ENCODE measurements at regions of chr18 and their contacts with region 1.

Region 1: DNA sequence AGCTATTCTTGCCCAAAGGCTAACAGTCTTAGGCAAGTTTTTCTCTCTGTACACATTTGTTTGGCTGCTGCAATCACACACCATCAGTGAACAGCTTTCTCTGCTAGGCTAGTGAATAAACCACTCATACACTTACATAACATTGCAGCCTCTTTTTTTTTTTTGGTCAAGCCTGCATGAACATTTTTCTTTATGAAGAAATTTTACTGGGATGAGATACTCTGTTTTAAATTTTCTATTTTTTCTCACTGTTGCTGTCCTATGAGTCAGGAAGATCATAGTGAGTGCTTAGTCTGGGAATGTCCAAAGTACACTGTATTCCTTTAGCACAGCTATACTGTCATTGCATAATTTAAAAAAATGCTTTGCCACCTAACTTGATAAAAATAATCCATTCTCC is 58.5 kb downstream of the ROCK1 start:
- DNase-seq: no peak

Region 2: DNA sequence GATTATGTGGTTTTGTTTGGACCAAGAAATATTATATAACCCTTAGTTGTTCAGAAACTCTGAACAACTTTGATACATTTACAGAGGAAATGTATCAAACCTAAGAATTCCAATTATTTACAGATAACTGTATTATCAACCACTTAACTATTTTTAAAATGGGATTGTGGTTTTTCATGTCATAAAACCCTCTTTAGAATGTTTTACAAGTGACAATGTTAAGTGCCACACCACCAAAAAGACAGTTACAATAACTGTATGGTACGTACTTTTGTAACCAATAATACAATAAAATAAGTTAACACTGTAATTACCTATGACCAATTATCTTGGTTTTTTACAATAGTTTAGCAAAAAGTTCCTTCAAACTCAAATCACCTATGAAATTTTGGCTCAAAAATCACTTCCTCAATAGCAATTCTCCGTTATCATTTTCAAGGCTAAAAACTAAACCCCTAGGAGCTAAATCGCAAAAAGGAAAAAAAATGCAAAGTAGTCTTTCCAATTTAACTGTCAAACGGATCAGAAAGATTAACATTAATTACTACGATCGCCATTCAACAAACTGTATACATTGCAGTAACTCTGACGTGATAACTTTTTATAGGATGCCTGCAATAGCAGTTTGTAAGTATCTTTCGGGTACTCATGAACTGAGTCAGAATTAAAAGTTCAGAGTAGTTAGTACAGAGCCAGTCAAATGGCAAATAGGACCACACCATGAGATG is 57.0 kb after region 1 on chr18:
- intact Hi-C with region 1: loop called (anchors 5 kb)
- DNase-seq: no peak

Measured in cardiac septum (tissue), 1 donor.